Naive thymus-derived CD4-positive, alpha-beta T cell (primary cell): ENCODE measurements at regions of chr13 and their contacts with region 1.

Region 1: DNA sequence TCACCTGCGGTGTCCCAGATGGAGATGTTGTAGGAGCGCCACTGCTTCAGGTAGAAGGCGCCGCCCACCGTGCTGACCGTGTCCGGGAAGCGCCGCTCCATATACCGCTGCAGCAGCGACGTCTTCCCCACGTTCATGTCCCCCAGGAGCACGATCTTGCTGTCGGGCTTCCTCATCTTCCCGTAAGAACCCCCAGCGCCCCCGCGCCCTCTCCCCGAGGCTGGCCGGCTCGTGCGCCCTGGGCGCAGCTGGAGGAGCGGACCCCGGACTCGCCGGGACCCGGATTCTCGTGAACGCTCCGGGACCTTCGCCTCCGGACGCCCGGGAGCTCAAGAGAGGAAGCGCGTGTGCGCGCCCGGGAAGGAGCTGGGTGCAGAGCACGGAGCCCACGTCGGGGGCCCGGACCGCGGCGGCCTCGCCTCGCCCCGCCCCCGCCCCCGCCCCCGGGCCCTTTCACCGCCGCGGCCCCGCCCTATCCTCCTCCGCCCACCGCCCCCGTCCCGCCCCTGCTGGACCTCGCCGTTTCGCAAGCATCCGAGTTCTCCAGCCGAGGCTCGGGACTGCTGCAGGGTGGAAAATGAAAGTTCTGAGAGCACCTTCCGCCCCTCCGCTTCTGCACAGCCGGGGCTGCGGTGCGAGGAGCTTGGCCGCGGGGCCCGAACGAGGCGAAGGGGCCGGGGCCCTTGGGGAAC is at the start of gene RAB20:
- DNase-seq: peak; percentile 5 to 66 (median 37)
- ATAC-seq: peak; percentile 82
- H3K4me3 ChIP-seq: peak within 1 kb of the TSS; percentile 79
- H3K4me3 Mint-ChIP-seq: peak within 1 kb of the TSS; percentile 85 to 99 (median 98)
- H3K27ac ChIP-seq: peak within 1 kb of the TSS; percentile 66
- H3K27ac Mint-ChIP-seq: peak within 1 kb of the TSS; percentile 73 to 96 (median 88)
- H3K4me1 ChIP-seq: peaks cover 4 to 9% of the 10 kb centered on the region in 2 donors
- H3K4me1 Mint-ChIP-seq: peaks cover 22 to 53% (median 41%) of the 10 kb centered on the region in 7 donors
- H3K27me3 ChIP-seq: no peaks in the 10 kb centered on the region
- H3K27me3 Mint-ChIP-seq: peaks cover 0 to 32% (median 4%) of the 10 kb centered on the region in 5 donors
- total RNA-seq, gene RAB20: 2.0 to 13.6 (median 4.0) TPM

Region 2: DNA sequence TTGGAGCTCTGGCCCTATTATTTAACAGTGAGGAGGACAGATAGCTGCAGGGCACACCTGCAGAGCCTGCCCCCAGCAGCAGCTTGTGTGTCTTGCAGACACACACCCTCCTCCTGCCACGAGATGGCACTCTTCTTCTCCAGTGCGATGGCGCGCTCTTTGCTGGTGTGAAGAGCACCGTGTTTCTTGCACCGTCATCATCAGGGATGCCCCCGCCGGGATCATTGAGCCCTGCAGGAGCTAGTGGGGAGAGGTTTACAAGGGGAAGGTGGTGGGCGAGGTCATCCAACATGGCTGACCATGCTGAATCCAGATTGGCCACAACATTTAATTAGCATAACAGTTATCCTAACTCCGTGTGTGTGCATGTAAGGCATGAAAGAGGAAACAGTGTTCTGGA is 105.5 kb before region 1 on chr13:
- CTCF ChIA-PET with region 1: no interaction called
- POLR2A ChIA-PET with region 1: no interaction called
- intact Hi-C with region 1: loop called (anchors 1 to 10 kb)
- DNase-seq: peak; percentile 21 to 58 (median 44)
- ATAC-seq: peak; percentile 87
- H3K4me3 ChIP-seq: no peak overlapping the region
- H3K4me3 Mint-ChIP-seq: peak overlapping the region in 9 of 10 donors; percentile 3 to 74 (median 45)
- H3K27ac ChIP-seq: no peak overlapping the region
- H3K27ac Mint-ChIP-seq: no peak overlapping the region
- H3K4me1 ChIP-seq: no peaks in the 10 kb centered on the region
- H3K4me1 Mint-ChIP-seq: peaks cover 2 to 6% (median 5%) of the 10 kb centered on the region in 7 donors
- H3K27me3 ChIP-seq: no peaks in the 10 kb centered on the region
- H3K27me3 Mint-ChIP-seq: peaks cover 14 to 29% (median 19%) of the 10 kb centered on the region in 5 donors

Region 3: DNA sequence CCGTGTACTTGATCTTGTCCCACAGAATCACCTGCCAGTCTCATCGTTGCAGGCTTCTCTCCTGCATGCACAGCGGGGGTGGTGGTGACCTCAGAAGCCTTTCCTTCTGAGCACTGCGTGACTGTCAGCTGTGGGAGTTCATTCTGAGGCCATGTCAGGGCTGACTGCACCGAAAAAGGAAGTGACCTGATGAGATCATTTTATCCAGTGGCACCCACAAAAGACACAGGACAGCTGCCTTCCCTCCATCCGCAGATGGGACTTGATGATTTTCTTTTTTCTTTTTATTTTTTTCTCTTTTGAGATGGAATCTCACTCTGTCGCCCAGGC is 89.7 kb before region 1 on chr13:
- CTCF ChIA-PET with region 1: no interaction called
- POLR2A ChIA-PET with region 1: no interaction called
- intact Hi-C with region 1: no loop called
- DNase-seq: no peak
- ATAC-seq: peak; percentile 89
- H3K4me3 ChIP-seq: no peak overlapping the region
- H3K4me3 Mint-ChIP-seq: no peak overlapping the region
- H3K27ac ChIP-seq: no peak overlapping the region
- H3K27ac Mint-ChIP-seq: no peak overlapping the region
- H3K4me1 ChIP-seq: no peaks in the 10 kb centered on the region
- H3K4me1 Mint-ChIP-seq: peaks cover 0 to 7% (median 0%) of the 10 kb centered on the region in 7 donors
- H3K27me3 ChIP-seq: no peaks in the 10 kb centered on the region
- H3K27me3 Mint-ChIP-seq: peaks cover 7 to 27% (median 8%) of the 10 kb centered on the region in 5 donors

Region 4: DNA sequence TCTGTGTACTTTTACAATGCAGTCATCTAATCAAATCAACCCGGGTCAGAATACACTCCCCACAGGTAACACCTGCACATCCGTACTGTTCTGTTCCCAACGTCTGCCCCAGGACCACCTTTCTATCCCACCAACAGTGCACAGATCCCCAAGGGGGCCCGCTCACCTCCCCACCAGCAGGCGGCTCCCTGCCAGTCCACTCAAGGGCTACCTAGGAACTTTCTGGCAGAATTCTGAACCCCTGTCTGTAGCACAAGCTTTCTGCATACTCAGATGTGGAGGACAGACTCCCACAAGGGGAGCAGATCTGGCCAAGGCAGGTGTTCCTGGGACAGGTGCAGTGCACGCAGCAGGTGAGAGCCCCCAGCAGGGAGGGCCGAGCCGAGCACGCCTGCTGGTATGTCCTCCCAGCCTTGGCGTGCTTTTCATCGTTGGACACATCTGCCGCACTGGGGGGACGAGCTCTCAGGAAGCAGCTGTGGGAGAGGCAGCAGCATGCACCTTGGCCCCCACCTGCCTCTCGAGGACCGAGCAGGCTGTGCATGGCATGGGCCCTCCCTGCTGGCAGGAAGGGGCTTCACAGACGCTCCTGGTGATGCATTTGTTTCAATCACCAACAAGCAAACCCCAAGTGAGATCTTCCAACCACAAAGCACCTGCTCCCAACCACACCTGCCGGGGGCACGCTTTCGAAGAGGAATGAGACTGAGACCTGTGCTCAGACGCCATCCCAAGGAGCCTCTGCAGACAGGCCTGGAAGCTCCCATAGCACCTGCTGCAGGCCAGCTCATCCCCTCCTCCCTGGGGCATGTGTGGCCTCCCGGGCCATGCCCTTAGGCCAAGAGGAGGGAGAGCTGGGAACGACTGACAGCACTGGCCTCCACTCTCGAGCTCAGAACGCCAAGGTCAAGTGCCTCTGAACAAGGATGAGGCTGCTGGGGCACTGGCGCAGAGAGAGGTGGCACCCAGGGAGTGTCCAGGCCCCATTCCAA is 35.9 kb before region 1 on chr13:
- CTCF ChIA-PET with region 1: no interaction called
- POLR2A ChIA-PET with region 1: no interaction called
- intact Hi-C with region 1: loop called in 1 of 2 experiments (anchors 5 kb)
- DNase-seq: peak in 6 of 9 donors; percentile 12 to 36 (median 25)
- ATAC-seq: no peak
- H3K4me3 ChIP-seq: no peak overlapping the region
- H3K4me3 Mint-ChIP-seq: peak overlapping the region in 7 of 10 donors; percentile 37 to 77 (median 71)
- H3K27ac ChIP-seq: no peak overlapping the region
- H3K27ac Mint-ChIP-seq: peak overlapping the region in 4 of 9 donors; percentile 54 to 89 (median 66)
- H3K4me1 ChIP-seq: peaks cover 9 to 22% of the 10 kb centered on the region in 2 donors
- H3K4me1 Mint-ChIP-seq: peaks cover 15 to 39% (median 31%) of the 10 kb centered on the region in 7 donors
- H3K27me3 ChIP-seq: no peaks in the 10 kb centered on the region
- H3K27me3 Mint-ChIP-seq: peaks cover 0 to 2% (median 0%) of the 10 kb centered on the region in 5 donors

Region 5: DNA sequence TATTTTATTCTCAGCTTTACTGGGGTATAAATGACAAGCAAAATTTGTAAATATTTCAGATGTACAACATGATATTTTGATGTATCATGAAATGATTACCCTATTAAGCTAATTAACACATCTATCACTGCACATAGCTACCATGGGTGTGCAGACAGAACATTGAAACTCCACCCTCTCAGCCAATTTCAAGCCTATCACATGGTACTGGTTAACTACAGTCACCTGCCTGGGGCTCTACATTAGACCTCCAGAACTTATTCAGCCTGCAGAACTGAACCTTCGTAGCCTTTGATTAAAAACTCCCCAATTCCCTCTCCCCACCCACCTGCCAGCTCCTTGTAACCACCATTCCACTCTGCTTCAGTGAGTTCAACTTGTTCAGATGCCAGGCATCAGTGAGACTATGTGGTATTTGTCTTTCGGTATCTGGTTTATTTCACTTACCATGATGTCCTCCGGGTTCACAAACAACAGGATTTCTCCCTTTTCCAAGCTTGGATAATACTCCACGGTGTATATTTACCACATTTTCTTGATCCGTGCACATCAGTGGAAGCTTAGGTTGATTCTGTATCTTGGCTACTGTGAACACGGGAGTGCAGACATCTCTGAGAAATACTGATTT is 19.2 kb before region 1 on chr13:
- CTCF ChIA-PET with region 1: no interaction called
- POLR2A ChIA-PET with region 1: no interaction called
- intact Hi-C with region 1: loop called in 1 of 2 experiments (anchors 2 kb)
- DNase-seq: no peak
- ATAC-seq: no peak
- H3K4me3 ChIP-seq: no peak overlapping the region
- H3K4me3 Mint-ChIP-seq: no peak overlapping the region
- H3K27ac ChIP-seq: no peak overlapping the region
- H3K27ac Mint-ChIP-seq: no peak overlapping the region
- H3K4me1 ChIP-seq: no peaks in the 10 kb centered on the region
- H3K4me1 Mint-ChIP-seq: peaks cover 4 to 12% (median 10%) of the 10 kb centered on the region in 7 donors
- H3K27me3 ChIP-seq: no peaks in the 10 kb centered on the region
- H3K27me3 Mint-ChIP-seq: no peaks in the 10 kb centered on the region